ENCODE measurements at regions of chr2 and their contacts with region 1.

Region 1: GRCh38 chr2:109545828-109546713 is 67.7 kb downstream of the SEPTIN10 start:
- DNase-seq: peak; percentile 61 to 66
- ATAC-seq: peak; percentile 79 to 95 (median 89)
- H3K4me3 ChIP-seq: no peak overlapping the region
- H3K27ac ChIP-seq: no peak overlapping the region
- H3K4me1 ChIP-seq: peaks cover 0 to 3% (median 0%) of the 10 kb centered on the region in 9 donors
- H3K27me3 ChIP-seq: no peaks in the 10 kb centered on the region
- CTCF ChIP-seq: peak; percentile 80 to 97 (median 94)

Region 2: DNA sequence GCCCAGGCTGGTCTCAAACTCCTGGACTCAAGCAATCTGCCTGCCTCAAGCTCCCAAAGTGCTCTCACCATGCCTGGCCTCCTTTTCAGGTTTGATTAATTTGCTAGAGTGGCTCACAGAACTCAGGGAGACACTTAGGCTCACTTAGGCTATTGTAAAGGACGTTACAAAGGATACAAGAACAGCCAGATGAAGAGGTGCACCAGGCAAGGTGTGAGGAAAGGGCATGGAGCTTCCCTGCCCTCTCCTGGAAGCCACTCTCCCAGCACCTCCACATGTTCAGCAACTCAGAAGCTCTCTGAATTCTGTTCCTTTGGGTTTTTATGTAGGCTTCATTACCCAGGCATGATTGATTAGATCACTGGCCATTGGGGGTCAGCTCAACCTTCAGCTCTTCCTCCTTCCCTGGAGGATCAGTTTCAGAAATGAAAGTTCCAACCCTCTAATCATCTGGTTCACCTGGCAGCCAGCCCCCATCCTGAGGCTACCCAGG is 169.3 kb after region 1 on chr2:
- intact Hi-C with region 1: loop called in 9 of 10 experiments (anchors 1 to 5 kb)
- DNase-seq: no peak
- ATAC-seq: peak; percentile 49 to 88 (median 82)
- H3K4me3 ChIP-seq: no peak overlapping the region
- H3K27ac ChIP-seq: no peak overlapping the region
- H3K4me1 ChIP-seq: no peaks in the 10 kb centered on the region
- H3K27me3 ChIP-seq: no peaks in the 10 kb centered on the region
- CTCF ChIP-seq: peak; percentile 10 to 72 (median 66)

Region 3: GRCh38 chr2:109726379-109727270 is 180.6 kb after region 1 on chr2:
- intact Hi-C with region 1: loop called in 2 of 10 experiments (anchors 5 kb)
- DNase-seq: no peak
- ATAC-seq: no peak
- H3K4me3 ChIP-seq: no peak overlapping the region
- H3K27ac ChIP-seq: no peak overlapping the region
- H3K4me1 ChIP-seq: peaks cover 0 to 5% (median 0%) of the 10 kb centered on the region in 9 donors
- H3K27me3 ChIP-seq: peaks cover 0 to 8% (median 0%) of the 10 kb centered on the region in 7 donors
- CTCF ChIP-seq: no peak

Region 4: GRCh38 chr2:109736177-109736827 is 190.2 kb after region 1 on chr2:
- intact Hi-C with region 1: loop called in 2 of 10 experiments (anchors 5 kb)
- DNase-seq: peak in 1 of 2 donors; percentile 58
- ATAC-seq: peak in 5 of 8 donors; percentile 56 to 76 (median 70)
- H3K4me3 ChIP-seq: no peak overlapping the region
- H3K27ac ChIP-seq: no peak overlapping the region
- H3K4me1 ChIP-seq: no peaks in the 10 kb centered on the region
- H3K27me3 ChIP-seq: no peaks in the 10 kb centered on the region
- CTCF ChIP-seq: peak; percentile 57 to 83 (median 76)